Gastrocnemius medialis (tissue), 4 donors: ENCODE measurements at regions of chr1 and their contacts with region 1.

Region 1: DNA sequence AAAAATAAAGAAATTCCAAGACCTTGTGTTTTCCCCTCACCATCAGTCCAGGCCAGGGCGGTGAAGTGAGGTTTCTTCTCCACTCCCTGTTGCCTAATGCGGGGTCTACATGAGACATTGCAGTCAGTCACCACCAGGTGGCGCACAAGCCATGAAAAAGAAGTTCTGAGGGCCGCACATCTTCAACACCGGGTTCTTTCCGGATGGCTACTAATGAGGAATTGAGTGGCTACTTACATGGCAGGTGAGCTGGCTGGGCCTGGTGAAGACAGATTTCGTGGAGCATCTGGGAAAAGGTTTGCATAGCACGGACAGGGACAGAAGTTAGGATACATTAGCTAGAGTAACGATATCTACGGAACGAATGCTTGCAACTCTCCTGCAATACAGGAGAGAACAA is 15.8 kb upstream of the S100A11 start:
- DNase-seq: peak; percentile 57 to 69
- ATAC-seq: peak; percentile 47 to 67
- H3K4me3 ChIP-seq: no peak overlapping the region
- H3K27ac ChIP-seq: no peak overlapping the region
- H3K4me1 ChIP-seq: peaks cover 7 to 8% of the 10 kb centered on the region in 2 donors
- H3K27me3 ChIP-seq: peaks cover 0 to 4% (median 0%) of the 10 kb centered on the region in 3 donors
- CTCF ChIP-seq: peak; percentile 39 to 89 (median 83)
- POLR2A ChIP-seq: no peak

Region 2: DNA sequence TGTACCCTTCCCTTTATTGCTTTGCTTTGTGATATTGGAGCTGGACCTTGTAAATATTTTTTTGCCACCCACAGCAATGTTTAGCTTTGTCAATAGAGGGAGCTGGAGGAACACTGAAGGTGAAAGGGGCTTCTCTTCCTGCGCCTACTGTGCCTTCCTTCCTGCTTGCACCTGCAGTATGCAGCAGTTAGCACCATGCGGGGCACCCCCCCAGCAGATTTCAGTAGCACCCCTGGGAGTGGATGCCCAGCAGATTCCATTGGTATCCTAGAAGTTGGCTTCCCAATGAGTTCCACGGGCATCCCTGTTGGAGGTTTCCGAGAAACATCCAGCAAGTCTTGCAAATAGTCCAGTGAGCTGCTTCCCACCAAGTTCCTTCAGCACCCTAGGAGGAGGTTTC is 84.5 kb before region 1 on chr1:
- in situ Hi-C with region 1: no loop called
- intact Hi-C with region 1: no loop called
- DNase-seq: no peak
- ATAC-seq: no peak
- H3K4me3 ChIP-seq: no peak overlapping the region
- H3K27ac ChIP-seq: no peak overlapping the region
- H3K4me1 ChIP-seq: peaks cover 0 to 3% of the 10 kb centered on the region in 2 donors
- H3K27me3 ChIP-seq: no peaks in the 10 kb centered on the region
- CTCF ChIP-seq: peak in 4 of 5 experiments; percentile 27 to 64 (median 50)
- POLR2A ChIP-seq: no peak

Region 3: DNA sequence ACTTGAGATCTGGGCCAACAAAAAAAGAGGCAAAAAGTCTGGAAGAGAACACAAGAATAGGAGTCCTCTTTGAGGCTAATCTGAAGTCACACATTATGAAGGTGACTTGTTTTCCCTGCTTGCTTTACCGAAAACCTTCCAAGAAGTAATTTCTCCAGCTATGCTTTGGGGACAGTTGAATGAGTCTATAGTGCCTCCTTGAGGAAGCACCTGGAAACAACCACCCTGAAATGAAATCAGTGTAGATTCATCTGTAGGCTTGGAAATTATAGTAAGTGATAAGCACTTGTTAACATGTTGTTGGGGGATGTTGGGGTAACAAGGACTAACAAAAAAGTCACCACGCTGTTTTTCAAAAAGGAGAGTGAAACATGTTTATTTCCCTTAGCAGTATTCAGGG is 129.8 kb after region 1 on chr1:
- in situ Hi-C with region 1: loop called in 3 of 4 experiments (anchors 5 to 10 kb)
- intact Hi-C with region 1: loop called (anchors 1 kb)
- DNase-seq: no peak
- ATAC-seq: no peak
- H3K4me3 ChIP-seq: no peak overlapping the region
- H3K27ac ChIP-seq: no peak overlapping the region
- H3K4me1 ChIP-seq: no peaks in the 10 kb centered on the region
- H3K27me3 ChIP-seq: no peaks in the 10 kb centered on the region
- CTCF ChIP-seq: peak in 1 of 5 experiments; percentile 12
- POLR2A ChIP-seq: no peak

Region 4: GRCh38 chr1:152189657-152190442 is 137.2 kb after region 1 on chr1:
- in situ Hi-C with region 1: loop called in 1 of 4 experiments (anchors 10 kb)
- intact Hi-C with region 1: loop called (anchors 1 kb)
- DNase-seq: no peak
- ATAC-seq: peak in 1 of 2 donors; percentile 16
- H3K4me3 ChIP-seq: peak overlapping the region; percentile 50 to 59 (median 56)
- H3K27ac ChIP-seq: no peak overlapping the region
- H3K4me1 ChIP-seq: no peaks in the 10 kb centered on the region
- H3K27me3 ChIP-seq: peaks cover 0 to 13% (median 6%) of the 10 kb centered on the region in 3 donors
- CTCF ChIP-seq: peak; percentile 17 to 57 (median 38)
- POLR2A ChIP-seq: no peak

Region 5: DNA sequence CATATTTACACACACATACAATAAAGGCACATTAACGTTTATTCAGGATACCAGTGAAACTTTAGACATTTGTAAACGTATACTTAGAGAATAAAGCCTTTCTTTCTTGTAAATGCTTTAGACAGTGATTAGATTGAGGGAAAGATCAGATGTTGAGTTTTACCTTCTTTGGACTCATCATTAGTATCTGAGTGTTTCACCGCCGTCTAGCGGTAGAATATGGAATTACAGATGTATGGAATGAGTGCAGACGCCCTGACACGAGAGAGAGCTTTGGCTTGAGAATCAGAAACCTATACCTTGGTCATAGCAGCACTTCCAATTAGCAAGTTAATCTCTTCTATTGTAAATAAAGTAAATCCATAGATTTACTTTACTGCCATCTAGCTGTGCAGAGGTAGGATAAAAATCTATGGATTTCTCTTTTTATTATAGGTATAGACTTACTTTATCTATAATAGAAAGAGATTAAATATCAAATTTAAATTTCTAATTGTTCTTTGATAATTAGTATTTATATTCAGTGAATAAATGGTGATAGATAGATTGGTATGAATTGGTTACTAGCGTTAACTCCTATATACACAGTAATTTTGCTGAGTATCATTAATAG is 294.6 kb after region 1 on chr1:
- in situ Hi-C with region 1: no loop called
- intact Hi-C with region 1: loop called (anchors 10 kb)
- DNase-seq: no peak
- ATAC-seq: no peak
- H3K4me3 ChIP-seq: no peak overlapping the region
- H3K27ac ChIP-seq: no peak overlapping the region
- H3K4me1 ChIP-seq: no peaks in the 10 kb centered on the region
- H3K27me3 ChIP-seq: no peaks in the 10 kb centered on the region
- CTCF ChIP-seq: peak in 4 of 5 experiments; percentile 10 to 54 (median 46)
- POLR2A ChIP-seq: no peak

Region 6: GRCh38 chr1:152440635-152441471 is 388.2 kb after region 1 on chr1:
- in situ Hi-C with region 1: loop called in 1 of 4 experiments (anchors 10 kb)
- intact Hi-C with region 1: loop called (anchors 1 kb)
- DNase-seq: peak; percentile 16 to 29
- ATAC-seq: peak; percentile 56 to 60
- H3K4me3 ChIP-seq: no peak overlapping the region
- H3K27ac ChIP-seq: no peak overlapping the region
- H3K4me1 ChIP-seq: no peaks in the 10 kb centered on the region
- H3K27me3 ChIP-seq: peaks cover 0 to 2% (median 0%) of the 10 kb centered on the region in 3 donors
- CTCF ChIP-seq: peak; percentile 26 to 71 (median 54)
- POLR2A ChIP-seq: no peak

Region 7: DNA sequence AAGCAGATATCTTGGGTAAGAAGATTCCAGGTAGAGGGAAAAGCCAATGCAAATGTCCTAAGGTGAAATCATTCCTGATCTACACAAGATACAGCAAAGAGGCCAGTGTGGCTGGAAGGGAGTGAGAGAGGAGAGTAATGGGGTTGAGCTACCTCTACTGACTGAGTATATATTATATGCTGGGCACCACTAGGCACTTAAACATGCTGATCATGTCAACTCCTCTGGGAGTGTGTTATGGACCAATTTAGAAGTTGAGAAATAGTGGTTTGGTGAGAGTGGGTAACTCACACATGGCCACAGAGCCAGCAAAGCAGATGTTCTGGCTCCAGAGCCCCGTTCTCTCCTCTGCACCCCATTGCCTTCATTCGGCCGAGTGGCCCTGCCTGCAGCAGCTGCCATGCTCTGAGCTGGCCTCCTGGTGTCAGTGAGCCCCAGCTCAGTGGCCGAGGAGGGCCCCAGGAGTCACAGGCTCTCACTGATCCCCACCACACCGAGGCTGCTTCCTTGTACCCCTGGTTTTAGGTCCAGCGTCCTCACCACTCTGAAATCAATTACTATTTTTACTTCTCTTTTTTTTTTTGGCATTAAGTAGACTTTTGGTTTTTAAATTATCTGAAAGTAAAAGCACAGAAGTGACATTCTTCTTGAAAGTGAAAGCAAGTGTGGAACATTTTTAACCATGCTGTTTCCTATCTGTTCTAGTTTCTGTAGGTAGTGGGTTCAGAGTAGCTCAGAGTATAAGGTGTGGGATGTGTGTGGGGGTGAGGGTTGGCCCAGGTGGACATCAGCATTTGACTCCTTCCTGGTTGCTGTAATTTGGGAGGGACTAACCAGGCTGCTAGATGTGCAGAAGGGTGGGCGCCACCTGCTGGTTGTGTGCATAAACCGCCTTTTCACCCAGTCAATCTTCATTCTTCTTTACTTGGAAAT is 407.3 kb after region 1 on chr1:
- in situ Hi-C with region 1: loop called in 3 of 4 experiments (anchors 10 kb)
- intact Hi-C with region 1: loop called (anchors 1 kb)
- DNase-seq: no peak
- ATAC-seq: no peak
- H3K4me3 ChIP-seq: peak overlapping the region in 2 of 4 donors; percentile 10 to 19
- H3K27ac ChIP-seq: peak overlapping the region in 1 of 4 donors; percentile 2
- H3K4me1 ChIP-seq: no peaks in the 10 kb centered on the region
- H3K27me3 ChIP-seq: no peaks in the 10 kb centered on the region
- CTCF ChIP-seq: peak in 4 of 5 experiments; percentile 18 to 62 (median 52)
- POLR2A ChIP-seq: no peak

Region 8: GRCh38 chr1:153032677-153033308 is 980.2 kb after region 1 on chr1:
- in situ Hi-C with region 1: no loop called
- intact Hi-C with region 1: no loop called
- DNase-seq: no peak
- ATAC-seq: no peak
- H3K4me3 ChIP-seq: no peak overlapping the region
- H3K27ac ChIP-seq: no peak overlapping the region
- H3K4me1 ChIP-seq: no peaks in the 10 kb centered on the region
- H3K27me3 ChIP-seq: no peaks in the 10 kb centered on the region
- CTCF ChIP-seq: no peak
- POLR2A ChIP-seq: no peak